Left cardiac atrium (tissue), 4 donors: ENCODE measurements at regions of chr11 and their contacts with region 1.

Region 1: GRCh38 chr11:8099291-8099899 is 18.4 kb downstream of the TUB start:
- DNase-seq: peak; percentile 70
- ATAC-seq: peak; percentile 54 to 70

Region 2: DNA sequence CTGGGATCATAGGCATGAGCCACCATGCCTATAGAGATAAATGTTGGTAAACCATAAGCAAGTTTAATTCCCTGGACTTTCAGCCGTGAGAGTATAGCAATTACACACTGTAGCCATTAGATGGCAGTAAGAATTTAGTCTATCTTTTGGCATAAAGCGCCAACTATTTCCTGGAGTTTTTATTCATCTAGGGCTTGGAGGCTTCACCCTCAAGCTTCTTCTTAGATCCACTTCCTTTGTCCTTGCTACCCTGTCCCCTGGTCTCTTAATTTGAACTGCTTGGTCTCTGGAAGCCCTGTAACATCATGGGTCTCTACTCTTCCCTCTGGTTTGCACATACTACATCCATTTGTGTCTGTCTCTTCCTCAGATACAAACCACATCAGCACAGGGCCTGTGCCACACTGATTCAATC is 206.5 kb before region 1 on chr11:
- intact Hi-C with region 1: loop called in 1 of 2 experiments (anchors 10 kb)
- DNase-seq: no peak
- ATAC-seq: peak; percentile 65 to 73